ENCODE measurements at regions of chr10 and their contacts with region 1.

Region 1: DNA sequence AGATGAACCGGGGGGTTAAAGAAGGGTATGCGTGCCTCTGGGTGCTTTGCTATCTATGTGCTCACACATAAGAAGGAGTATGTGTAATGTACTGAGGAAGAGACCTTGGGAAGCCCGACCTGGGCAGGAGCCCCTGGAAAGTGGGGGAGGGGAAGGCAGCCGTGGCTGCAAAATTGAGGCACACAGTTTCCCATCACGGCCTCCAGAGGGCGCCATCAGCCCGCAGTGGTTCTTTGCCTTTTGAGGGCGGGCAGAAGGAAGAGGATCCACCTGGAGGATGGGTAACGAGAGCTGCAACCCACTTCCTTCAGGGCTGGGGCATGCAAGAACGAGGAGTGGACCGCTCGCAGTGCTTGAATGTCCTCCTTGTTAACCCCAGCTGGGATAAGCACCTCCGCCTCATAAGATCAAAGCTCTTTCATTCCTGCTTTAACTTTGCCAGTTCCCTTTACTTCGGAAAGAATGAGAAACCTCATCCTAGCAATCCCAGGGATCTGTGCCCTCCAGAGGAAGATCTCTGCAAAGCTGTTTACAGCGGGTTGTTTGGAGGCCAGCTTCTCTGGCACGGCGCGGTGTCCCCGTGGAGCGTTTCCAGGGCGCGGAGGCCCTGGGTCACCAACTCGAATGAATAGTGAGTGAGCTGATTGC is 77.9 kb downstream of the PCGF5 start:
- DNase-seq: peak; percentile 83
- H3K4me3 ChIP-seq: peak overlapping the region; percentile 16 to 63 (median 33)
- H3K27ac ChIP-seq: no peak overlapping the region
- H3K4me1 ChIP-seq: peaks cover 2% of the 10 kb centered on the region
- H3K27me3 ChIP-seq: no peaks in the 10 kb centered on the region
- CTCF ChIP-seq: peak; percentile 90 to 97
- POLR2A ChIP-seq: peak; percentile 25

Region 2: DNA sequence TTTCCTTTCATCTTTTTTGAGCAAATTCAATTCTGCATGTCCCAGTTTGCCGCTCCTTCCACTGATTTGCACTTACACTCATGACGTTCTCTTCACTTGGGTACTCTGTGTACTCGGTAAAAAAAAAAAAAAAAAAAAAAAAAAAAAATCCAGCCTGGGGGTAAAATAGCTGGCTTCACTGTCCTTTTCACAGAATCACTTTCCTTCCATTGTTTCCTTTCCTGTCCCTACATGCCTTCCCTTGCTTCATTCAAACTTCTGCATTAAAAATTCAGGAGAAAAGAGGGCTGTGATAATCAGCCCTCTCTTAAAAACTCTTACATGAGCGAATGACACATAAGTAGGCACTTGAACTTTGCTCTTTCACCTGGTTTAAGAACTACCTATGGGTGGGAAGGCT is 386.2 kb before region 1 on chr10:
- CTCF ChIA-PET with region 1: interaction called, 14 read pairs
- POLR2A ChIA-PET with region 1: no interaction called
- dilution Hi-C with region 1: no loop called
- intact Hi-C with region 1: loop called (anchors 1 kb)
- DNase-seq: no peak
- H3K4me3 ChIP-seq: no peak overlapping the region
- H3K27ac ChIP-seq: peak overlapping the region; percentile 25
- H3K4me1 ChIP-seq: peaks cover 44% of the 10 kb centered on the region
- H3K27me3 ChIP-seq: no peaks in the 10 kb centered on the region
- CTCF ChIP-seq: no peak
- POLR2A ChIP-seq: no peak

Region 3: GRCh38 chr10:91340613-91341362 is 42.4 kb after region 1 on chr10:
- CTCF ChIA-PET with region 1: interaction called, 36 read pairs
- POLR2A ChIA-PET with region 1: no interaction called
- dilution Hi-C with region 1: no loop called
- intact Hi-C with region 1: loop called (anchors 1 kb)
- DNase-seq: peak; percentile 94
- H3K4me3 ChIP-seq: peak overlapping the region in 1 of 3 experiments; percentile 10
- H3K27ac ChIP-seq: peak overlapping the region; percentile 93
- H3K4me1 ChIP-seq: peaks cover 31% of the 10 kb centered on the region
- H3K27me3 ChIP-seq: no peaks in the 10 kb centered on the region
- CTCF ChIP-seq: no peak
- POLR2A ChIP-seq: no peak

Region 4: DNA sequence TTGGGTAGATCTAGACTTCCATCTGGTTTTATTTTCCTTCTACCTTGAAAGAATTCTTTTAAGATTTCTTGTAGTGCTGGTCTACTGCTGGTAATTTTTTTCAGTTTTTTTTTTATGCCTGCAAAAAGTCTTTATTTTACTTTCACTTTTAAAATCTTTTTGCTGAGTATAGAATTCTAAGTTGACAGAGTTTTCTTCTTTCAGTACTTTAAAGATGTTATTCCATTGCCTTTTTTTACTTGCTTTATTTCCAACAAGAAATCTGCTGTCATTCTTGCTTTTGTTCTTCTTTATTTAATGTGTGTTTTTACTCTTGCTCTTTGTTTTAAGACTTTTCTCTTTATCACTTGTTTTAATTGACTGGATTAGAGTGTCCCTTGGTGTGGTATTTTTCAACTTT is 75.7 kb after region 1 on chr10:
- CTCF ChIA-PET with region 1: interaction called, 137 read pairs
- POLR2A ChIA-PET with region 1: no interaction called
- dilution Hi-C with region 1: no loop called
- intact Hi-C with region 1: loop called (anchors 1 kb)
- DNase-seq: no peak
- H3K4me3 ChIP-seq: no peak overlapping the region
- H3K27ac ChIP-seq: no peak overlapping the region
- H3K4me1 ChIP-seq: peaks cover 3% of the 10 kb centered on the region
- H3K27me3 ChIP-seq: peaks cover 5 to 13% of the 10 kb centered on the region in 2 experiments
- CTCF ChIP-seq: no peak
- POLR2A ChIP-seq: no peak

Region 5: DNA sequence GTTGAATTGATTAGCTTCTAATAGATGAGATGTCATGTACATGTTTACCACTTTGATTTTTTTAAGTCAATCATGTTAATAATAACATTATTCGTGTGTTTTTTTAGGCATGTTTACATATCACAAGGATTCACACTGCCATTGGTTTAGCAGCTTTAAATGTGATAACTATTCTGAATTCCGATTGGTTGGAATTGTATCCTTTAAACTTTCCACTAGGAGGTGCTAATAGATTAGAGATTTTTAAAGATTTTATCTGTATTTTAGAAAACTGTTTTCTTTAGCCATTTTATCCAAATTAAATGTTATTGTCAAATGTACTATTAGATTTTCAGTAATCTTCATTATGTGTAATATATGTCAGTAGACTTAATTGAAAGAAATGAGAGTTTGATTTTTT is 195.0 kb after region 1 on chr10:
- CTCF ChIA-PET with region 1: interaction called, 7 read pairs
- POLR2A ChIA-PET with region 1: no interaction called
- dilution Hi-C with region 1: no loop called
- intact Hi-C with region 1: loop called (anchors 5 kb)
- DNase-seq: peak; percentile 24
- H3K4me3 ChIP-seq: no peak overlapping the region
- H3K27ac ChIP-seq: no peak overlapping the region
- H3K4me1 ChIP-seq: no peaks in the 10 kb centered on the region
- H3K27me3 ChIP-seq: no peaks in the 10 kb centered on the region
- CTCF ChIP-seq: no peak
- POLR2A ChIP-seq: no peak

Region 6: DNA sequence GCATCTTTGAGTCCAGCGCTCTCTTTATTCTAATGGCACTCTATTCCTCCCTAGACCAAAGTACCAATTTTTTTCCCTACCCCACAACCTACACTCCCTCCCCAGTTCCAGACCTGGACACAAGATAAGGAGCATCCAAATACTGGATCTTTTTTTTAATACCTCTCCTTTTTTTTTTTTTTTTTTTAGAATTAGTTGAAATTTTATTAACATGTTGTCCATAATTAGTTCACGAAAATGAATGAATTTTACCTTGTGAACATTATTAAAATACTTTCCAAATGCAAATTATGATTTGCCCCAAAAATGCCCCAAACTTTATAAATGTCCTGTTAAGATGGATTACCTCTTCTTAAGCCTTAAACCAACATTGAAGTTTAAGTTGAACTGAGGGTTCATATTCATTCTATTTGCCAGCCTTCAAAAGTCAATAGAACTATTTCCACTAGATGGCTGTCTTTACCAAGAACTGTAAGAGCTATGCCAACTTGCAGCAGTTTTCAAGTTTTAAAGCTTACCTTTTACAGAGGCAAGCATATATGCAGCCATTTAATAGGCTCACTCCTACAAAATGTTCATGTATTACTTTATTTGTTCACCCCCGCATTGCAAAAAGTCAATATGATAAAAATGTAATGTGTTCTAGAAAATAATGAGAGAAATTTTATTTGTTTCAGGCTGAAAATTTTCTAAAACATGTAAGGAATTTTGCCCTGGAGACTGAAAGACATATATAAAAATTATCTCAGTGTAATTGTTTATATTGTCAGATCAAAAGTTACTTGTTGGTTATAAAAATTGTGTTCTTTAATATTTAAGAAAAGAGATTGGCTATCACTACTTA is 460.2 kb after region 1 on chr10:
- CTCF ChIA-PET with region 1: interaction called, 12 read pairs
- POLR2A ChIA-PET with region 1: no interaction called
- dilution Hi-C with region 1: no loop called
- intact Hi-C with region 1: no loop called
- DNase-seq: peak; percentile 64
- H3K4me3 ChIP-seq: no peak overlapping the region
- H3K27ac ChIP-seq: no peak overlapping the region
- H3K4me1 ChIP-seq: no peaks in the 10 kb centered on the region
- H3K27me3 ChIP-seq: peaks cover 7 to 35% of the 10 kb centered on the region in 2 experiments
- CTCF ChIP-seq: peak; percentile 19 to 33
- POLR2A ChIP-seq: no peak

Measured in endothelial cell of umbilical vein (primary cell).